Psoas muscle (tissue), 8 donors: ENCODE measurements at regions of chr4 and their contacts with region 1.

Region 1: DNA sequence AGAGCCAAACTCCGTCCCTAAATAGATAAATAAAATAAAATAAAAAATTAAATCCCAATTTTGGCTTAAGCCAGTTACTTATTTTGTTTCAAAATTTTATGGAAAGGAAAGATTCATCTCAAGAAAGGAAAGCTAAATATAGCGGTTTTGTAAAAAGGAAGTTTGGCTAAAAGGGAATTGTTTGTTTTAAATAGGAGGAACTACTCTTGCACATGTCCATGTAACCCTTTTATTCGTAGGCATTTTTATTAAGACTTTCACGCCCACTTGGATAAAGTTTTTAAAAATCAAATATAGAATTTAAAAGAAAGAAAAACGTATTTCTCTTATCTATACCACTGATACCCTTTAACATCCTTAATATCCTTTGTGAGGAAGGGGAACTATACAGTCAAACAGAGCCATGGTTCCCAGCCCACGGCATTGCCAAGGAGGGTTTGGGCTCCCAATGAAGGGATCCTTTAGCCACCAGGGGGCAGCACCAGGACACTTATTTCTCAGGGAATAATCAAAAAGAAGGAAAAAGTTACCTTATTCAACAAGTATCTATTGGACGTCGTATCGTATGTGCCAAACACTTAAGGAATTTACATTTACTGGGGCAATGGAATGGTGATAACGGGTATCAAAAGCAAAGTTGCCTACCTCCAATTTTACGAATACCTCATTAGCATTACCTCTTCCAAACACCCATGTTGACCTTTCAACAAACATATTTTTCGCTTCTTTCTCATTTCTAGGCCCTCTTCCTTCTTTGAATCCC is 27.7 kb downstream of the CDKN2AIP start:
- DNase-seq: peak; percentile 85 to 91
- ATAC-seq: peak; percentile 68 to 97 (median 85)
- H3K4me3 ChIP-seq: peak overlapping the region; percentile 26
- H3K27ac ChIP-seq: no peak overlapping the region
- H3K4me1 ChIP-seq: no peaks in the 10 kb centered on the region
- H3K27me3 ChIP-seq: no peaks in the 10 kb centered on the region
- CTCF ChIP-seq: peak; percentile 90

Region 2: GRCh38 chr4:183602557-183603027 is 130.5 kb after region 1 on chr4:
- intact Hi-C with region 1: loop called (anchors 2 to 10 kb)
- DNase-seq: no peak
- ATAC-seq: peak in 2 of 4 donors; percentile 60 to 76
- H3K4me3 ChIP-seq: no peak overlapping the region
- H3K27ac ChIP-seq: no peak overlapping the region
- H3K4me1 ChIP-seq: no peaks in the 10 kb centered on the region
- H3K27me3 ChIP-seq: no peaks in the 10 kb centered on the region
- CTCF ChIP-seq: peak; percentile 43

Region 3: DNA sequence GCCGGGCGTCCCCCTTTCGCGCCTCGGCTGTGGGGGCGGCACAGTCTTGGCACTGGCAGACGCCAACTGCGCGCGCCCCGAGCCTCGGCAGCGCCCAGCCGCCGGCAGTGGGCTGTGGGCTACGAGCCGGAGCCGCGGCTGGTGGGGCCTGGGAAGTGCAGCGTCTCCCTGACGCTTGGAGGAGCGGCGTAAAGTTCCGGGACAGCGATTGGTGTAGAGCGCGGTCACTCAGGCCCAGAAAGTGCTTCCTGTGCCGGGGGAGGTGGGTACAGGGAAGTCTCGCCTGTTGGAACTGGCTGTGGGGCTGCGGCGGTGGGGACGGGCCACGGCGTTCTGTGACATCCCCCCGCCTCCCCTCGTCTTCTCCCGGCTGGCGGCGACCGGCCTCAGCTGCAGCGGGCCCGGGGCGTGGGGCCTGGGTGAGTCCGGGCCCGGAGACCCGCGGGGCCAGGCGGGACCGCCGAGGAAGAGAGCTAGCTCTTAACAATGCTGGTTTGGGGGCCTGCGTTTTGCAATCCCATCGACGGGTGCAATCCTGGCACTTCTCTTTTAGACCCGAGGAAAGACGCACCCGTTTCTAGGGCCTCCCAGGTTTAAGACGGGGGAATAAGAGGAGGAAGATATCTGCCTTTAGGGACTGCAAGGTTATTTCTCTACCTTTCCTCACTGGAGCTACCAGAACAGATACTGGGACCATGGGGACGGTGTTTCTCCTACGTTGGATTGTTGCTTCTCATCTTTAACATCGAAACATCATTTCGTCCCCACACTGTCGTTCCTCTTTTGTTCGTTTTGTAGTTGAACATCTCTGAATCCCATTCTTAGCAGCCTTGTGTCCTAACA is 187.1 kb after region 1 on chr4 and contains the starts of genes RWDD4 and TRAPPC11:
- intact Hi-C with region 1: loop called in 1 of 2 experiments (anchors 2 kb)
- DNase-seq: peak; percentile 98 to 99
- ATAC-seq: peak; percentile 100
- H3K4me3 ChIP-seq: peak within 1 kb of the TSS; percentile 92
- H3K27ac ChIP-seq: peak within 1 kb of the TSS; percentile 89
- H3K4me1 ChIP-seq: peaks cover 18% of the 10 kb centered on the region
- H3K27me3 ChIP-seq: no peaks in the 10 kb centered on the region
- CTCF ChIP-seq: peak; percentile 31
- total RNA-seq, gene RWDD4: 19.1 to 33.5 (median 29.8) TPM
- total RNA-seq, gene TRAPPC11: 20.6 to 24.3 (median 23.9) TPM